Kidney (tissue), 22 donors: ENCODE measurements at regions of chr1 and their contacts with region 1.

Region 1: DNA sequence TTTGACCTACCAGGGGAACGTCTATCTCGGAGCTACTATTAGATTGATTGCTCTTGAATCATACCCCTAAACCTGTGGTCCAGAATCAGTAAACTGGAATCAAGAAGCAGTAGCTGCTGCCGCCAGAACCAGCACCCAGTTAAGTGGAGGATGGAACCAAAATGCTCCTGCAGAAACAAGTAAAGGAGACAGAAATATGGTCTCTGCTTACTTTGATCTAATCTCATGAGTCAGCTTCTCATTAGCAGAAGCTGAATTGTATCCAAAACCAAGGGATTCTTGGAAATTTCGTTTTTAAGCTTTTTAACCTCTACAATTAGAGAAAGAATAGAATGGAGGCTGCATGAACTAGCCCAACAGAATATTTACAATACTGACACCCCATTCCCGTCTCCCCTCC is 42.6 kb upstream of the PIGV start:
- DNase-seq: no peak
- H3K4me3 ChIP-seq: no peak overlapping the region
- H3K27ac ChIP-seq: no peak overlapping the region
- H3K4me1 ChIP-seq: peaks cover 0 to 9% (median 6%) of the 10 kb centered on the region in 3 donors
- H3K27me3 ChIP-seq: no peaks in the 10 kb centered on the region
- CTCF ChIP-seq: no peak

Region 2: DNA sequence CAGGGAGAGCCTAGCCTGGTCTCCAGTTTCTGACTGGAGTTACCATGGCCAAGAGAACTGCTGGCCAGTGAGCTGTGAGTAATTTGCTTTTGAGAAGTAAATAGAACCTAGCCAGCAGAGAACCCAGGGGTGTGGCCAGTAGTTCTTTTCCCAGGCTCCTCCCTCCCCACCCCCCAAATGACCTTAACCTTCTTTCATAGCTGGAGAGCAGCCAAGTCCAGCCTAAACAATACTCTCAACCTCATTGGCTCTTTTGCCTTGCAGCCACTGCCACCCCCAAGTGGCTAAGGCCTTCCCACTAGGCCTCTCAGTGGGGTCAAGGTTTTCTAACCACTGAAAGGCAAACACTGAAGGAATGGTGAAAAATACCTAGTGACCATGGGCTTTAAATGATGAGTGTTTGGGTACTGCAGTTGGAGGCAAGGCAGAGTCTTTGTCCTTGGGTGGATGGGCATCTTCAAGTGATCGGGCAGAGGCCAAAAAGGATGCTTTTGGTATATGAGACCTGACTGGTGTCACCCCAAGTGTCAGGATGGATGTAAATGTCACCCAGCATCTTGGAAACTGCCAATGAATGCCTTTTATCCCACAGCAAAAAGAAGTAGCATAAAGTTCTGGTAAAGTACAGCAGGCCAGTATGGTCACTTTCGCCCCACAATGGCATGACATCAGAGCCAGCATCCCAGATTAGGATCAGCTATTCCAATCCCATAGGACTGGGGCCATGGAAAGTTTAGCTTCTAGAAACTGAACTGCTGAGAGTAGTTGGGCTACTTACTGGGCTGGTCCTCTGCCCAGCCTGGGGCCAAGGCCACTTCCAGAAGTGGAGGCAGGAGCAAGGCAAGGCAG is 39.1 kb after region 1 on chr1:
- intact Hi-C with region 1: loop called (anchors 5 kb)
- DNase-seq: peak in 4 of 5 donors; percentile 68 to 90 (median 78)
- H3K4me3 ChIP-seq: peak overlapping the region in 1 of 3 donors; percentile 21
- H3K27ac ChIP-seq: peak overlapping the region; percentile 72 to 81
- H3K4me1 ChIP-seq: peaks cover 19 to 53% (median 38%) of the 10 kb centered on the region in 3 donors
- H3K27me3 ChIP-seq: no peaks in the 10 kb centered on the region
- CTCF ChIP-seq: no peak